Activated CD4-positive, alpha-beta T cell treated with anti-CD3 and anti-CD28 coated beads, Interleukin-2, amount 10 ng/mL, durations not matched to agents 24 days and 14 days (primary cell): ENCODE measurements at regions of chr10 and their contacts with region 1.

Region 1: GRCh38 chr10:70549962-70550458 is 52.5 kb downstream of the PRF1 start:
- DNase-seq: peak; percentile 92
- H3K4me3 Mint-ChIP-seq: no peak overlapping the region
- H3K27ac Mint-ChIP-seq: no peak overlapping the region
- H3K4me1 Mint-ChIP-seq: no peaks in the 10 kb centered on the region
- H3K27me3 Mint-ChIP-seq: peaks cover 1% of the 10 kb centered on the region

Region 2: GRCh38 chr10:70537344-70538209 is 12.4 kb before region 1 on chr10:
- intact Hi-C with region 1: no loop called
- DNase-seq: peak; percentile 73
- H3K4me3 Mint-ChIP-seq: no peak overlapping the region
- H3K27ac Mint-ChIP-seq: no peak overlapping the region
- H3K4me1 Mint-ChIP-seq: no peaks in the 10 kb centered on the region
- H3K27me3 Mint-ChIP-seq: no peaks in the 10 kb centered on the region

Region 3: GRCh38 chr10:70880077-70880534 is 330.1 kb after region 1 on chr10:
- intact Hi-C with region 1: loop called (anchors 1 kb)
- DNase-seq: peak; percentile 92
- H3K4me3 Mint-ChIP-seq: no peak overlapping the region
- H3K27ac Mint-ChIP-seq: no peak overlapping the region
- H3K4me1 Mint-ChIP-seq: peaks cover 11% of the 10 kb centered on the region
- H3K27me3 Mint-ChIP-seq: no peaks in the 10 kb centered on the region